Left cardiac atrium (tissue), 4 donors: ENCODE measurements at regions of chr5 and their contacts with region 1.

Region 1: GRCh38 chr5:157820593-157821252 is 38.2 kb downstream of the CLINT1 start:
- DNase-seq: no peak
- ATAC-seq: no peak

Region 2: DNA sequence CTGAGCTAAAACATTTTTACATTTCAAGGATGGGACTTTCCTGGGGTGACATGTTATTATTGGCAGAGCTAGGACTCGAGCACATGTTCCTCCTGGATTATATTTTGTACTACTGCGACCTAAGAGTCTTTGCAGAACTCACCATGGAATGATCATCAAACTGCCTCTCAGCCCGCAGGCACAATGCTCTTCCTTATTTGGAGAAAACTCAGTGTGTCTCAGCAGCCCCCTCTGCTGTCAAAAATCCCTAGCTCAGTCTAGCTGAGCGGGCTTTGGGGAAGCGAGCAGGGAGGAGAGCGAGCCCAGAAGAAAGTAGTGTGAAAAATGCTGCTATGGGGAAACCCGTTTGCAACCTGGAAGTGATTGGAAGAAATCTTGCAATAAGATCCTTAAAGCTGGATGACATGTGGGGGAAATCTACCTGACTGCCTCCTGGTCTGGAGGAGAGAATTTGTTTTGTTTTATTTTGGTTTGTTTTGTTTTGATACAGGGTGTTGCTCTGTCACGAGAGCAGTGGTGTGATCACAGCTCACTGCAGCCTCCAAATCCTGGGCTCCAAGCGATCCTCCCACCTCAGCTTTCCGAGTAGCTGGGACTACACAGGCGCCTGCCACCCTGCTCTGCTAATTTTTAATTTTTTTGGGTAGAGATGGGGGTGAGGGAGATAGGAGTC is 128.2 kb after region 1 on chr5:
- intact Hi-C with region 1: loop called in 1 of 2 experiments (anchors 5 kb)
- DNase-seq: peak; percentile 89
- ATAC-seq: peak; percentile 99 to 100

Region 3: GRCh38 chr5:157994906-157995519 is 174.3 kb after region 1 on chr5:
- intact Hi-C with region 1: loop called in 1 of 2 experiments (anchors 2 kb)
- DNase-seq: peak; percentile 76
- ATAC-seq: peak; percentile 97